Breast epithelium (tissue), 4 donors: ENCODE measurements at regions of chr3 and their contacts with region 1.

Region 1: DNA sequence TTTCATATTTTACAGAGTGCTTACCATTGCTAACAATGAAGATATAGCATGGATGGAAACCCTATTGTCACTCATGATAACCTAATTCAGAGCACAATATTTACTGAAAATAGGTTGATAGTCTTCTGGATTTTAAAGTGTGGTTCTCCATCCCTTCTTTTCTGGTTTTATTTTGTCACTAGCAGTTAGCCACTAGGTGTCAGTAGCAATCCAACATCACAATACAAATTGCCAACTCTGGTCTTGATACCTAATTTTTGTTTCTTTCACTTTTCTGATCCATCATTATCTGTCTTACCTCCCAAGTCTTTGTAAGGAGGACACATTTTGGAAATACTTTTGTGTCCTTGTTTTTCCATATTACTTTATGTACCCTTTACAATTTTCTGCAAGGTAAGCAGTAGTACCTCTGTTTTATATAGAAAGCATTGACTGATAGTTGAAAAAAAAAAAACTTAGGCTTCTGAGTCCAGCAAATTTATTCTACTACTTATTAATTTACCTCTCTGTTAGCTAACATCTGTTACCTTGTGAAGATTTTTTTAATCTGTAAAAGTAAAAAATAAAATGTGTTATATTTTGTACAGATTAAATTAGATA is 28.3 kb upstream of the CRYBG3 start:
- DNase-seq: no peak
- H3K4me3 ChIP-seq: no peak overlapping the region
- H3K27ac ChIP-seq: no peak overlapping the region
- H3K4me1 ChIP-seq: no peaks in the 10 kb centered on the region
- H3K27me3 ChIP-seq: no peaks in the 10 kb centered on the region
- CTCF ChIP-seq: peak; percentile 73 to 80 (median 74)
- POLR2A ChIP-seq: no peak

Region 2: DNA sequence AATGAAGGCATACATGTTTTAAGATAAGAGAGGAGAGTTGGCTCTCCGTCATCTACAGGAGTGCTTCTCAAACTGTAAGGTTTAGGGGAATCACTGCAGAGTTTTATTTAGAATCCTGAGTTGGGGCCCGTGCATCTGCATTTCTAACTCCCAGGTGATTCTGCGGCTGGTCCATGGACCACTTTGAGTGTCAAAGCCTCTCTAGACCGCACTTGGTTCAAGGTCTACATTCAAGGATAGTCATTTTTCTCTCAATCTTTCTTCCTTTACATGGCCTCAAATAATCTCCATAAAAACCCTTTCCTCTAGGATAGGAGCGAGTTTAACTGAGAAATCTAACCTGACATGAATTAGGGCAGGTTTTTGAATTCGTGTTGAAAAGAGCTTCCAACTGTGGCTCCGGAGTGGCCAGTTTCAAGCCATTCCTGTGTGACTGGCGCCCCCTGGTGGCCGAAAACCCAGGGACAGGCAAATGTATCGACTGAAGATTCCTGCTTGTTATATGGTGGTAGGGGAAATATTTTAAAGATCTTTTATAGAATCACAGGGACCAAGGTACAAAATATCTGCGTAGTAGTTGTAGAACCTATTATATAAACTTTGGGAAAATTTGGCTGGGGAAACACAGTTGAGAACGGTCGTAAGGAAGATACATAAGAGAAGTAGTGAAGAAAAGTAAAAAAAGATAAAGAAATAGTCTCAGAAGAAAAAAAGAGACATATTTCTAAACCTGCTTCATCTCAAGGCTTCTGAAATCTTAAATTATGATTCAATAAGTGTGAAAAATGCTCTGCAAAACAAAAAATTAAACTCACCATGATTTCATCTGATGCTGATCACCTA is 229.7 kb after region 1 on chr3:
- intact Hi-C with region 1: loop called (anchors 10 kb)
- DNase-seq: peak; percentile 75 to 92
- H3K4me3 ChIP-seq: no peak overlapping the region
- H3K27ac ChIP-seq: no peak overlapping the region
- H3K4me1 ChIP-seq: no peaks in the 10 kb centered on the region
- H3K27me3 ChIP-seq: no peaks in the 10 kb centered on the region
- CTCF ChIP-seq: peak; percentile 90 to 96 (median 91)
- POLR2A ChIP-seq: no peak